Gastrocnemius medialis (tissue), 4 donors: ENCODE measurements at regions of chr7 and their contacts with region 1.

Region 1: DNA sequence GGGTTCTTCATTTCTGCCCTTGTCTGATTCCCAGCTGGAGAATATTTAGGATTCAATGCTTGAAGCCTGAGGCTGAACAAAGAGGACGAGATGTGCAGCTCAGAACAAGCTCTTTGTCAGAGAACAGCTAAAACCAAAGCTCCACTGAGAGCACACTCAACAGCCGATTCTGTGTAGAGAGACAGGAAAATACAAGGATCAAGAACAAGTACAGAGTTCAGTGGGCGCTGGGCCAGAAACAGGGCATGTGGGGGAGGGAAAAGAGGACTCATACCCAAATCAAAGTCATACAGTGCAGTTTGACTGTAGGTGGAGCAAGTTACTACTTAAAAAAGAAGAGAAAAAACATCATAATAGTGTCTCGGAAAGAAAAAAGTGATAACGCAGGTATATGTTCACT is at the start of gene AGMO:
- DNase-seq: peak; percentile 10 to 48
- ATAC-seq: peak; percentile 56 to 66
- H3K4me3 ChIP-seq: peak within 1 kb of the TSS; percentile 7 to 41 (median 32)
- H3K27ac ChIP-seq: peak within 1 kb of the TSS; percentile 66 to 74 (median 73)
- H3K4me1 ChIP-seq: no peaks in the 10 kb centered on the region
- H3K27me3 ChIP-seq: no peaks in the 10 kb centered on the region
- CTCF ChIP-seq: no peak
- POLR2A ChIP-seq: no peak
- total RNA-seq, gene AGMO: 0.11 to 0.55 TPM in 2 of 4 donors, not detected in the others

Region 2: DNA sequence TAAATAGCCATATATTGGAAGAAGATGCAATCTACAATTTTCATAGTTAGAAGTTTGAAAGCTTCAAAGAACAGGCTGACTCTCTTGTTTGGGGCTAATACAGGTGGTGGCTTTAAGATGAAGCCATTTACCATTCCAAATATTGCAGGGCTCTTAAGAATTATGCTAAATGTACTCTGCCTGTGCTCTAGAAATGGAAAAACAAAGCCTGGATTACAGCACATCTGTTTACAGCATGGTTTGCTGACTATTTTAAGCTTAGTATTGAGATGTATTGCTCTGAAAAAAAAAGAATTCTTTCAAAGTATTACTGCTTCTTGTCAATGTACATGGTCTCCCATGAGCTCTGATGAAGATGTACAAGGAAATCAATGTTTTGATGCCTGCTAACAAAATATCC is 34.2 kb before region 1 on chr7:
- in situ Hi-C with region 1: no loop called
- intact Hi-C with region 1: no loop called
- DNase-seq: no peak
- ATAC-seq: no peak
- H3K4me3 ChIP-seq: no peak overlapping the region
- H3K27ac ChIP-seq: no peak overlapping the region
- H3K4me1 ChIP-seq: no peaks in the 10 kb centered on the region
- H3K27me3 ChIP-seq: no peaks in the 10 kb centered on the region
- CTCF ChIP-seq: no peak
- POLR2A ChIP-seq: no peak

Region 3: DNA sequence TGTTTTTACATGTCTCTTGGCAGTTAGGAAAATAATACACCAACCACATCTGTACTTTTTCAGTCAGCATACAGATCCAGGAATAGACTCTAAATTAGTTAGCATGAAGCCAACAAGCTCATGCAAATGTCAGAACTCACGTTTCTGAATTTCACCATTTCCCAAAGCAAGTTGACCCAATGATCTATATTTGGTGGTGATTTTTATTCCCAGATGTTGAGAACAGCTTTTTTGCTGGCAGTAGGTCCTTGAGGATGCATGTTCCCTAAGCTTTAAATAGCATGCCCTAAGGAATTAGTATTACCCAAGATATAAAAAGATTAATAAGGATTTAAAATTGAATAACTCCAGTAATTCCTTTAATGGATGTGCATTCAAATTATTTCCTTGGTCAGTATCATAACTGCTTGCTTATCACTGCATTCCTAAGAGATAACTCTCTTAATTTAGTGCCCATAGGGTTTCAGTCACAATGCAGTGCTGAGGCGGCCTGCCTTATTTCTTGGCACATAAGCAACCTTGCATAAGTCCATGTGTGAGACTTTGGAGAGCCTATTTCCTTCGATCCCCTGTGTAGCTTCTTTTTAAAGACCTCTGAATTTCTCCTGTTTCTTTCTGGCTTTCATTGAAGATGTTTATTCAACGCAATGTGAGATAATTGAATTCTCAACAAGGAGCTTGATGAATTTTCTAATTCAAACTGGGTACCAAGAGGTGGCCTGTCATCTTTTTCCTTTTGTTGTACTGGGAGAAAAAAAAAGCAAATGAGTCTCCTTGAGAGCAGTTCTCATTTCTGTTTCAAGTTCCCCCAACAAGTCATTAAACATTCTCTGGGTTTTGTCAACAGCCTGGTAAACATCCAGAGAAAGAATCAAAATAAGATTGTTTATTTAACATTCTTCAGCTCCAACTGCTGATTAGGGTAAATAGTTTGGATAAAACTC is 259.9 kb after region 1 on chr7:
- in situ Hi-C with region 1: no loop called
- intact Hi-C with region 1: loop called (anchors 10 kb)
- DNase-seq: no peak
- ATAC-seq: peak in 1 of 2 donors; percentile 21
- H3K4me3 ChIP-seq: no peak overlapping the region
- H3K27ac ChIP-seq: no peak overlapping the region
- H3K4me1 ChIP-seq: no peaks in the 10 kb centered on the region
- H3K27me3 ChIP-seq: no peaks in the 10 kb centered on the region
- CTCF ChIP-seq: no peak
- POLR2A ChIP-seq: no peak